Activated CD8-positive, alpha-beta memory T cell treated with anti-CD3 and anti-CD28 coated beads, Interleukin-2, amount 10 ng/mL, durations not matched to agents 7 days and 5 days (primary cell): ENCODE measurements at regions of chr19 and their contacts with region 1.

Region 1: GRCh38 chr19:36837906-36838783 is at the start of gene ZNF790:
- DNase-seq: peak; percentile 93
- ATAC-seq: peak; percentile 96
- H3K4me3 Mint-ChIP-seq: no peak within 1 kb of the TSS
- H3K27ac Mint-ChIP-seq: peak within 1 kb of the TSS; percentile 75
- H3K4me1 Mint-ChIP-seq: peaks cover 5% of the 10 kb centered on the region
- H3K27me3 Mint-ChIP-seq: no peaks in the 10 kb centered on the region
- total RNA-seq, gene ZNF790: 6.5 to 7.8 TPM

Region 2: GRCh38 chr19:36748431-36749275 is 89.5 kb before region 1 on chr19:
- CTCF ChIA-PET with region 1: no interaction called
- DNase-seq: no peak
- ATAC-seq: no peak
- H3K4me3 Mint-ChIP-seq: no peak overlapping the region
- H3K27ac Mint-ChIP-seq: no peak overlapping the region
- H3K4me1 Mint-ChIP-seq: no peaks in the 10 kb centered on the region
- H3K27me3 Mint-ChIP-seq: no peaks in the 10 kb centered on the region

Region 3: DNA sequence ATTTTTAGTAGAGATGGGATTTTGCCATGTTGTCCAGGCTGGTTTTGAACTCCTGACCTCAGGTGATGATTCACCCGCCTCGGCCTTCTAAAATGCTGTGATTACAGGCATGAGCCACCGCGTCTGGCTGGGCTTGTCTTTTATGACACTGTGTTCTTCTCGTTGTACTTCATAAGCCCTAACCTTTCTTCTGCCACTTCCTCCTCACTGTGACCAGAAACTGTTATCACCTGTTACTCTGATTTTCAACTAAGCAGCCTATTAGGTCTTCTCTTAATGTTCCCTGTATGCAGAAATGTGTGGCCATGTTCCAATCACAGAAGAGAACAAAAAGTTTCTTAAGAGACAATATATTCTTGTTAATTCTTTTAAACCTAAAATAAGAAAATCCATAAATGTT is 16.4 kb before region 1 on chr19:
- CTCF ChIA-PET with region 1: no interaction called
- DNase-seq: no peak
- ATAC-seq: no peak
- H3K4me3 Mint-ChIP-seq: no peak overlapping the region
- H3K27ac Mint-ChIP-seq: no peak overlapping the region
- H3K4me1 Mint-ChIP-seq: no peaks in the 10 kb centered on the region
- H3K27me3 Mint-ChIP-seq: no peaks in the 10 kb centered on the region

Region 4: DNA sequence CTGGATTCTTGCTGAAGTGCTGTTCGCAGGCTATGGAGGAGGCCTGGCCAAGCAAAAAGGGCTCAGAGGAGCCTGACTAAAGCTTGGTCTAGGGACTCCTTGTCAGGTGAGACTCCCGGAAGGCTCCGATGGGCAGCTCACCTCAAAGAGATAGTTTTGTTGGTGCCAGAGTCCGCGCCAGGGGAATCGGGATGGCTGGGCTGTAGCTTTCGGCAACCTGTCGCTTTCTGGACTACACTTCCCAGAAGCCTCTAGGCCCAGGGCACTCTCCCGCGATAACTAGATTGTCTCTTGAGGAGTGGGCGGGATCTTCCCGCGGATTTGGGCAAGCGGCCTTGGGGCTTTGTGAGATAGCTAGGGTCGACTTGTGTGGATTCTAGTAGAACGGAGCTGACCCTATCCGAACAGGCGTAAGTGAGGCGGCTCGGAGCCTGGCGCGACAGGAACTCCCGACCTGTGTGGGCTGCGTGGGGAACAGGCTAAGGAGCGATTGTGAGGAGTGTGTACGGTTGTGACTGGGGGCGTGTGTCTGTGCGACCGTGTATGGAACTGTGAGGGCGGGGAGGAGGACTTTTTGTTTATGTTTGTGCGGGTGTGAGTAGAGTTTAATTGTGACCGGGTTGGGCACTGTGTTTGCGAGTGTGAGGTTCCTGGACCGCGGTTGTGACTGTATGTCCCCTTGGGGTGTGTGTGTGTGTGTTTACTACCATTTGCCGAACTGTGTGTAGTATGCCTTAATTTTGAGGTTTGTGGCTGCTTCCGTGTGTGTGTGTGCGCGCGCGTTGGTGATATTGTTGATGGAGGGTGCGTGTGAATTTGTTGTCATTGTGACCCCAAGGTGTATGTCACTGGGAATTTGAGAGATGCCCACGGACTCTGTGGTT is 12.7 kb after region 1 on chr19 and contains the start of gene ZNF345:
- CTCF ChIA-PET with region 1: interaction called, 29 read pairs
- DNase-seq: peak; percentile 94
- ATAC-seq: peak; percentile 87
- H3K4me3 Mint-ChIP-seq: no peak within 1 kb of the TSS
- H3K27ac Mint-ChIP-seq: no peak within 1 kb of the TSS
- H3K4me1 Mint-ChIP-seq: peaks cover 5% of the 10 kb centered on the region
- H3K27me3 Mint-ChIP-seq: no peaks in the 10 kb centered on the region
- total RNA-seq, gene ZNF345: 4.1 to 6.2 TPM

Region 5: DNA sequence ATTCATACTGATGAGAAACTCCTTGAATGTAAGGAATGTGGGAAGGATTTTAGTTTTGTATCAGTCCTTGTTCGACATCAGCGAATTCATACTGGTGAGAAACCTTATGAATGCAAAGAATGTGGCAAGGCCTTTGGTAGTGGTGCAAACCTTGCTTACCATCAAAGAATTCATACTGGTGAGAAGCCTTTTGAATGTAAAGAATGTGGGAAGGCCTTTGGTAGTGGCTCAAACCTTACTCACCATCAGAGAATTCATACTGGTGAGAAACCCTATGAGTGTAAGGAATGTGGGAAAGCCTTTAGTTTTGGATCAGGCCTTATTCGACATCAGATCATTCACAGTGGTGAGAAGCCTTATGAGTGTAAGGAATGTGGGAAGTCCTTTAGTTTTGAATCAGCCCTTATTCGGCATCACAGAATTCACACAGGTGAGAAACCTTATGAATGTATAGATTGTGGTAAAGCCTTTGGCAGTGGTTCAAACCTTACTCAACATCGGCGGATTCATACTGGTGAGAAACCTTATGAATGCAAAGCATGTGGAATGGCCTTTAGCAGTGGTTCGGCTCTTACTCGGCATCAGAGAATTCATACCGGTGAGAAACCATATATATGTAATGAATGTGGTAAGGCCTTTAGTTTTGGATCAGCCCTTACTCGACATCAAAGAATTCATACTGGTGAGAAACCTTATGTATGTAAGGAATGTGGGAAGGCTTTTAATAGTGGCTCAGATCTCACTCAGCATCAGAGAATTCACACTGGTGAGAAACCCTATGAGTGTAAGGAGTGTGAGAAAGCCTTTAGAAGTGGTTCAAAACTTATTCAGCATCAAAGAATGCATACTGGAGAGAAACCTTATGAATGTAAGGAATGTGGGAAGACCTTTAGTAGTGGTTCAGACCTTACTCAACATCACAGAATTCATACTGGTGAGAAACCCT is 39.1 kb after region 1 on chr19:
- CTCF ChIA-PET with region 1: no interaction called
- DNase-seq: no peak
- ATAC-seq: no peak
- H3K4me3 Mint-ChIP-seq: no peak overlapping the region
- H3K27ac Mint-ChIP-seq: no peak overlapping the region
- H3K4me1 Mint-ChIP-seq: no peaks in the 10 kb centered on the region
- H3K27me3 Mint-ChIP-seq: no peaks in the 10 kb centered on the region